ENCODE measurements at regions of chr6 and their contacts with region 1.

Region 1: GRCh38 chr6:78824045-78824444 is 43.3 kb upstream of the IRAK1BP1 start:
- DNase-seq: no peak
- H3K4me3 Mint-ChIP-seq: no peak overlapping the region
- H3K27ac Mint-ChIP-seq: no peak overlapping the region
- H3K4me1 Mint-ChIP-seq: no peaks in the 10 kb centered on the region
- H3K27me3 Mint-ChIP-seq: peaks cover 2% of the 10 kb centered on the region

Region 2: DNA sequence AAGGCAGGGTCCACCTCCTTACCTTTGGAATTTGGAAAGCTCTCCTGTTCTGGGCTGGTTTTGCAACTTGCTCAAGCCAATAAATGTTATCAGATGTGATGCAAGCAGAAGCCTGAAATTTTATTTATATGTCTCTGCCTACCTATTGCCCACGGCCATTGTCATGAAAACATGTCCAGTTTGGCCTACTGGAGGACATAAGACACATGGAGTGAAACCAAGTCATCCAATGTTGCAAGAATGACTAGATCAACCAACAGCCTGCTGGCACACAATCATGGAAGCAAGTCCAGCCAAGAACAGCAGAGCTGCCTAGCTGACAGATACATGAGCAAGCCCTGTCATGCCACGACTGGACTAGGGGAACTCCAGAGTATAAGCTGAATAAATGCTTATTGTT is 13.3 kb before region 1 on chr6:
- intact Hi-C with region 1: loop called (anchors 1 kb)
- DNase-seq: no peak
- H3K4me3 Mint-ChIP-seq: no peak overlapping the region
- H3K27ac Mint-ChIP-seq: no peak overlapping the region
- H3K4me1 Mint-ChIP-seq: no peaks in the 10 kb centered on the region
- H3K27me3 Mint-ChIP-seq: peaks cover 1% of the 10 kb centered on the region